HepG2 (cell line): ENCODE measurements at regions of chr1 and their contacts with region 1.

Region 1: GRCh38 chr1:183635606-183636333 is at the start of gene ARPC5:
- DNase-seq: peak; percentile 90
- ATAC-seq: peak; percentile 90
- H3K4me3 ChIP-seq: peak within 1 kb of the TSS; percentile 89 to 97 (median 91)
- H3K27ac ChIP-seq: peak within 1 kb of the TSS; percentile 84
- H3K4me1 ChIP-seq: peaks cover 73% of the 10 kb centered on the region
- H3K27me3 ChIP-seq: no peaks in the 10 kb centered on the region
- CTCF ChIP-seq: no peak
- EP300 ChIP-seq: no peak; a peak in 1 of 4 replicates
- POLR2A ChIP-seq: peak; percentile 83 to 84
- RAD21 ChIP-seq: no peak
- total RNA-seq, gene ARPC5: 106 and 148 TPM in 2 replicates

Region 2: DNA sequence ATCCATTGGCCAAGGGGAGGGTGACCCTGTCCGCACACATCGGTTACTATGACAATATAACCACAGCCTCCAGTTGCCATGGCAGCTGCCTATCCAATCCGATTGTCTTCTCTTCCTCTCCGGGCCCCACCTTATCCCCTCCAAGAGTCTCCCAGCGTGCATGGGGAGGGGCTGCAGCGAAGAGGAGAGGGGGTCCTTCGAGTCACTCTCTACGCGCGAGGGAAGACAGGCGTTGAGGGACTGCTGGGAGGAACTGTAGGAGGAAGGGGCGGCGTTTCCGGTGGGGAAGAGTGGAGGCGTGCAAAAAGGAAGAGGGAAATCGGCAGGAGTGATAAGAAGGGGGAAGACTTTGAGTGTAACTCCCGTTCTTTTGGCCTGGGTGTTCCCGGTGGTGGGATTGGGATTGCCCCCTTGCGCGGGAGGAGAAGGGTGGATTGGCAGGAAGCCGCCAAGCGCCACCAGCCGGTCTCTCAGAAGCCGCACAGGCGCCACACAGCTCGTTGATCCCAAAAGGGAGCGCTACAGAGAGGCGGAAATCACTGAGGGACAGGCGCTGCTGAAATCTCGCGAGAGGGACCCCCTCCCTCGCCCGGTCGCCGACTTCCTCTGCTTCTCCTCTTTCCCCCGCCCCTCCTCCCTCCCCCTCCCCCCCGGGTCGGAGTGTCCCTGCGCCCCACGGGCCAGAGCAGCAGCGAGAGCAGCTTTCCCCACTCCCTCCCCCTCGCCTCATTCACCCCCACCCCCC is 163.9 kb before region 1 on chr1:
- CTCF ChIA-PET with region 1: no interaction called
- POLR2A ChIA-PET with region 1: interaction called, 5 read pairs
- in situ Hi-C with region 1: no loop called
- intact Hi-C with region 1: loop called (anchors 5 kb)
- DNase-seq: peak; percentile 96
- ATAC-seq: peak; percentile 80
- H3K4me3 ChIP-seq: peak overlapping the region; percentile 80 to 99 (median 87)
- H3K27ac ChIP-seq: peak overlapping the region; percentile 100
- H3K4me1 ChIP-seq: peaks cover 53% of the 10 kb centered on the region
- H3K27me3 ChIP-seq: no peaks in the 10 kb centered on the region; a peak in 1 of 5 replicates
- CTCF ChIP-seq: peak; percentile 32; the same call in 1 of the 2 replicates
- EP300 ChIP-seq: no peak
- POLR2A ChIP-seq: peak; percentile 50 to 64; a peak in 3 of 4 replicates
- RAD21 ChIP-seq: peak; percentile 35

Region 3: DNA sequence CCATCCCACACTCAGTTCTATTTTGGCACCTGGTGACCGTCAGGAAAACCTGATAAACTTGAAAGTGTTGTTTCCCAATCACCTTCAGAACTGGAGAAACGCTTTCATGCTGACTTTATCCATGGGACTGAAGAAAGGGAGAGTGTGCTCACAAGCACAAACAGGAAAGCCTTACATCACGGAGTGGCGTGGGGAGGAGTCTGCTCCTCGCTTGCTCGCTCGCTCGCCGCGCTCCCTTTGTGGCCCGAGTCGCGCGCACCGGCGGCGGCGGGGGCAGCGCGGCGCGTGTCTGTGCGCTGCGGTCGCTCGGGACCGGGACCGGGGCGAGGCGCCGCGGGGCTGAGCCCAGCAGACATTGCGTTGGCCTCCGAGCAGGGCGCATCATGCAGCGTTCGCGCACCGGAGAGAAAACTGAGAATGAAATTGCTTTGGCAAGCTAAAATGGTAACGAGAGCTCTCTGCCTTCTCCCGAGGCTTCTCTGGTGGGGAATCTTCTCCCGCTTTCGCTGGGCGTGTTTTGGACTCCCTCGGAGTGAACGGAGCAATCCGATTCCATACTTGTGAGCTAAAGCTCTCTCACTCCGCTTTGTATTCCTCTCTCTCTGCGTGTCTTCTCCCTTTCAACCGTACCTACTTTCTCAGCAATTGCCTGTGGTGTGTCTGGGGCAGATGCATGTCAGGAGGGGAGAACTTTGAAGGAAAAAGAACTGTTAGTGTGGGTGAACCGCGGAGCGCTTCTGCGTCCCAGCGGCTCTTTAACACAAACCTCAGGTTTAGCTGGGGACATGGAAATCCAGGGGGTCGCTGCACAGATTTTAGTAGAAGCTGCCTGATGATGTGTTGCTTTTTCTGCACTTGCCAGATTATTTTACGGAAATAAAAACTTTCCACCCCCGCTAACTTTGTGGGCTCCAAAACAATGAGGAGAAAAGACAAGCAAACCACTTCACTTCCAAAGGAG is 169.4 kb after region 1 on chr1 and contains the start of gene RGL1:
- CTCF ChIA-PET with region 1: no interaction called
- POLR2A ChIA-PET with region 1: no interaction called
- in situ Hi-C with region 1: no loop called
- intact Hi-C with region 1: loop called (anchors 5 kb)
- DNase-seq: peak; percentile 61
- ATAC-seq: peak; percentile 91
- H3K4me3 ChIP-seq: peak within 1 kb of the TSS; percentile 71 to 83 (median 72)
- H3K27ac ChIP-seq: no peak within 1 kb of the TSS
- H3K4me1 ChIP-seq: peaks cover 30% of the 10 kb centered on the region
- H3K27me3 ChIP-seq: no peaks in the 10 kb centered on the region; a peak in 1 of 5 replicates
- CTCF ChIP-seq: no peak
- EP300 ChIP-seq: no peak
- POLR2A ChIP-seq: peak in 1 of 2 experiments; percentile 60; a peak in 2 of 4 replicates
- RAD21 ChIP-seq: 0 out of 2 replicates have a peak, but pooled peaks have one; percentile 24
- total RNA-seq, gene RGL1: 4.7 and 5.7 TPM in 2 replicates